ENCODE measurements at regions of chr9 and their contacts with region 1.

Region 1: DNA sequence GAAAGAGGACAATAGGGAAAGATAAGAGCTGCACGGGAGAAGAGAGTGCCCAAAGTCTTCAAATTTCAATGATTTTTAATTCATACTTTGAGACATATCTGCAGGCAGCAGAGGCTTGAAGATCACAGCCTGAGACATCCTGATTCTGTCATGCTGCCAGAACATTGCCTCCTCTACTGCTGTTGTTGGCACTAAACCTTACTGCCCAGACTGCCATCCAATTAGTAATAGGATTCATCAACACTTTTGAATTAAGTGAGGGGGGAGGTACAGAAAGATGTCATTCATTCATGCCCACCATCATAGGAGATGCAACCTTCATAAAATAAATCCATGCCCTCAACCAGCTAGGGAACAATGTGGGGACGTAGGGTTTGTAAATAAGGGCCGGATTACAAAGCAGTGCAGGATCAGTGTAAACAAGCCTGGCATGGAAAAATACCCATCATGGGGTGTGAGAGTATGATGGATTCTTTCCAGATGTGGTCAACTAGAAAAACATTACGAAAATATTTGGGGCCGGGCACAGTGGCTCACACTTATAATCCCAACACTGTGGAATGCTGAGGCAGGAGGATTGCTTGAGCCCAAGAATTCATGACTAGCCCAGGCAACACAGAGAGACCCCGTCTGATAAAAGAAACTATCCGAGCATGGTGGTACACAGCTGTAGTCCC is 122.1 kb upstream of the DAPK1 start:
- DNase-seq: peak; percentile 65 to 75
- H3K4me3 ChIP-seq: no peak overlapping the region
- H3K27ac ChIP-seq: peak overlapping the region; percentile 66
- H3K4me1 ChIP-seq: peaks cover 48% of the 10 kb centered on the region
- H3K27me3 ChIP-seq: no peaks in the 10 kb centered on the region
- CTCF ChIP-seq: no peak

Region 2: DNA sequence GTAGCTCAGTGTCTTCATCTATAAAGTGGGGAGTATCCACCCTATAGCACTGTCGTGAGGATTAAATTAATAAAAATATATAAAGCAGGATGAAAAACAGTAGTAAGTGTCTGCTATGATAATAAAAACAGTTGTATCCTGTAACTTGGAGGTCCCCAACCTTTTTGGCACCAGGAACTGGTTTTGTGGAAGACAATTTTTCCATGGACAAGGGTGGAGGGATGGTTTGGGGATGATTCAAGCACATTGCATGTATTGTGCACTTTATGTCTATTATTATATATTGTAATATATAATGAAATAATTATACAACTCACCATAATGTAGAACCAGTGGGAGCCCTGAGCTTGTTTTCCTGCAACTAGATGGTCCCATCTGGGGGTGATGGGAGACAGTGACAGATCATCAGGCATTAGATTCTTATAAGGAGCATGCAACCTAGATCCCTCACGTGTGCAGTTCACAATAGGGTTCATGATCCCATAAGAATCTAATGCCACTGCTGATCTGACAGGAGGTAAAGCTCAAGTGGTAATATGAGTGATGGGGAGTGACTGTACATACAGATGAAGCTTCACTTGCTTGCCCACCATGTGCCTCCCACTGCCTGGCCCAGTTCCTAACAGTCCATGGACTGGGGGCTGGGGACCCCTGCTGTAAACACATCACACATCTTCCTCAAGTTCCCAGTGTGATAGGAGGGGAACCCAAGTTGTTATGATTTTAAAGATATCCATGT is 55.2 kb before region 1 on chr9:
- CTCF ChIA-PET with region 1: no interaction called
- POLR2A ChIA-PET with region 1: no interaction called
- intact Hi-C with region 1: no loop called
- DNase-seq: no peak
- H3K4me3 ChIP-seq: no peak overlapping the region
- H3K27ac ChIP-seq: no peak overlapping the region
- H3K4me1 ChIP-seq: no peaks in the 10 kb centered on the region
- H3K27me3 ChIP-seq: no peaks in the 10 kb centered on the region
- CTCF ChIP-seq: no peak

Region 3: GRCh38 chr9:87405677-87406542 is 30.4 kb after region 1 on chr9:
- CTCF ChIA-PET with region 1: no interaction called
- POLR2A ChIA-PET with region 1: no interaction called
- intact Hi-C with region 1: loop called (anchors 2 kb)
- DNase-seq: peak in 1 of 2 experiments; percentile 65
- H3K4me3 ChIP-seq: peak overlapping the region; percentile 2; the same call in 1 of the 2 replicates
- H3K27ac ChIP-seq: peak overlapping the region; percentile 69
- H3K4me1 ChIP-seq: peaks cover 53% of the 10 kb centered on the region
- H3K27me3 ChIP-seq: no peaks in the 10 kb centered on the region
- CTCF ChIP-seq: no peak

Region 4: GRCh38 chr9:87428646-87429045 is 53.1 kb after region 1 on chr9:
- CTCF ChIA-PET with region 1: no interaction called
- POLR2A ChIA-PET with region 1: interaction called, 5 read pairs
- intact Hi-C with region 1: loop called (anchors 2 kb)
- DNase-seq: peak; percentile 71 to 93
- H3K4me3 ChIP-seq: peak overlapping the region; percentile 41; the same call in 1 of the 2 replicates
- H3K27ac ChIP-seq: peak overlapping the region; percentile 88
- H3K4me1 ChIP-seq: peaks cover 31% of the 10 kb centered on the region
- H3K27me3 ChIP-seq: no peaks in the 10 kb centered on the region
- CTCF ChIP-seq: no peak

Region 5: DNA sequence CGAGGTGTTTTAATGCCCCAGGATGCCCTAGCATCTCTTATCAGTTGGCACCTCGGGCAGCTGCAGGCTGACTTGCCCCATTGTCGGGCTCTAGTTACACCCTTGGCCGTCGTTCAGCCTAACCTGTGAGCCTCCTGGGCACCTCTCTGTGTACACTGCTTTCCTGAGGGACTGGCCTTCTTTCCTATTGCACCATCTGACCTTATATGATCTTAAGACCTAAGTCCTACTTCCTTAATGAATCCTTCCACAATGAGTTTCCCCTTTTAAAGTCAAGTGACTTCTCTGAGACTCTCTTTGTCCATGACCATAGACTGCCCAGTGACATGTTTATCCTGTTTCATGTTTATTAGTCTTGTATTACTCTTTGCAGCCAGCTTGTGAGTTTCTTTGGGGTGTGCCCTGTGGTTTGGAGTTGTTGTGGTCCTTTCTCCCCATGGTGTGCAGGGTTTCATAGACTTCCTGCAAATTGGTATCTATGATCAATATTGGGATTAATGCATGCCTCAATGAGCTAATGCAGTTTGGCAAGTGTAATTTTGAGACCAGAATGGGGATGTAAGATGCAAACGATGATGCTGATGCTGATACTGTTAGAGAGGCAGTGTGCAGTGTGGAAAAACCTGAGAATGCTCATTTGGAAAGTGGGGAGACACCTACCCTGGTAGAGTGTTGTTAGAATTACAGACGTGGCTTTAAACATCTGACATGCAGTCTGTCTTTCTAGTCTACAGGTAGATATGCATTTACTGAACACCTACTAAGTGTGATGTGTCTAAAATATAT is 127.1 kb after region 1 on chr9:
- CTCF ChIA-PET with region 1: no interaction called
- POLR2A ChIA-PET with region 1: no interaction called
- intact Hi-C with region 1: loop called (anchors 2 kb)
- DNase-seq: peak; percentile 82 to 98
- H3K4me3 ChIP-seq: peak overlapping the region; percentile 29; the same call in 1 of the 2 replicates
- H3K27ac ChIP-seq: peak overlapping the region; percentile 83
- H3K4me1 ChIP-seq: peaks cover 81% of the 10 kb centered on the region
- H3K27me3 ChIP-seq: no peaks in the 10 kb centered on the region
- CTCF ChIP-seq: no peak

Region 6: DNA sequence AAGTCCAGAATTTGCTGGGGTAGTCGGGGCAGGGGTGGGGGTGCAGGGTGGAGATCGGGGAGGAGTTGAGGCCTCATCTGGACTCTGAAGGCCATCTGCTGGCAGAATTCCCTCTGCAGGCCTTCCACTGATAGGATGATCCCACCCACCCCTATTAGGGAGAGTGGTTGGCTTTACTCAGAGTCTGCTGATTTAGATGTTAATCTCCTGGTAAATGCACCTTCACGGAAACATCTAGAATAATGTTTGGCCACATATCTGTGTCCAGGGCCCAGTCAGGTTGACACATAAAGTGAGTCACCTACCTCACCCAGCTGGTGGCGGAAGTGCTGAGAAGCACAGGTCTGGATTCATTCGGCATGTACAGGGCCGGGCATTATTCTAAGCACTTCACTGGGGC is 172.1 kb after region 1 on chr9:
- CTCF ChIA-PET with region 1: no interaction called
- POLR2A ChIA-PET with region 1: no interaction called
- intact Hi-C with region 1: loop called (anchors 2 kb)
- DNase-seq: peak; percentile 69 to 80
- H3K4me3 ChIP-seq: no peak overlapping the region
- H3K27ac ChIP-seq: no peak overlapping the region
- H3K4me1 ChIP-seq: peaks cover 17% of the 10 kb centered on the region; the same call in 1 of the 2 replicates
- H3K27me3 ChIP-seq: no peaks in the 10 kb centered on the region
- CTCF ChIP-seq: no peak

Measured in PC-9 (cell line).